Colonic mucosa (tissue), 4 donors: ENCODE measurements at regions of chr4 and their contacts with region 1.

Region 1: DNA sequence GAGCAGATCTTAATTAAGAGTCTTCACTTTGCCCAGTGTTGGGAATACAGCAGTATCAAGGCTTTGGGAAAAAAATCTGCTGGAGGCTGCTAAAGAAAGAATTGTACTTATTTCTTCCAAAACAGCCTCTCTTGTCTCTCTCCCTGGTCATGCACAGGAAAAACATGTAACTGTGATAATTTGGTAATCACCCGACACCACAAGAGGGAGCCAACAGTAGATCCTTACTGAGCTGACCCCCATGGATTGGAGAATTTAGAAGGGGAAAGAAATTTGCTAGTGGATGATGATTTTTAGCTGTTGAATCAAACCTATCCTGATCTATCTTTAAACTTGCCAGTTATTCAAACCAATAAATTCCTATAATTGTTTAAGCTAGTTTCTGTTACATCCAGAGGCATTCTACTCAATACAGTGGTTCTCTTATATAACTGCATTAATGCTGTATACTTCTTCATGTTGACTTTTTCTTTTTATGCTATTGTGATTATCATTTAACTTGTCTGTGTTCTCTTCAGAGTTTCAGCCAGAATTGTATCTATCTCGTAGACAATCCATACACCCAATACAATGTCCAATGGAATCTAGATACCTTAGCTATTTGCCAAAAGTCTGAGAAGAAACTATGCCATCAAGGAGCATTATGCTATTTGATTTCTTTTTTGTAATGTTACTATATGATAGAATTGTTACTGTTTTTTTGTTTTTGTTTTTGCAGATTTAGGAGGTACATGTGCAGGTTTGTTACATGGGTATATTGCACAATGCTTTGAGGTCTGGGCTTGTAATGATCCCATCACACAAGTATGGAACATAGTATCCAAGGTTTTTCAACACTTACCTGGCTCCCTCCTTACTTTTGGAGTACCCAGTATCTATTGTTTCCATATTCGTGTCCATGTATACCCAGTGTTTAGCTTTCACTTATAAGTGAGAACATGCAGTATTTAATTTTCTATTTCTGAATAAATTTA is 31.3 kb upstream of the ARHGEF38 start:
- DNase-seq: peak; percentile 60
- H3K4me3 ChIP-seq: no peak overlapping the region
- H3K27ac ChIP-seq: no peak overlapping the region
- H3K4me1 ChIP-seq: no peaks in the 10 kb centered on the region
- H3K27me3 ChIP-seq: no peaks in the 10 kb centered on the region
- CTCF ChIP-seq: peak; percentile 84

Region 2: DNA sequence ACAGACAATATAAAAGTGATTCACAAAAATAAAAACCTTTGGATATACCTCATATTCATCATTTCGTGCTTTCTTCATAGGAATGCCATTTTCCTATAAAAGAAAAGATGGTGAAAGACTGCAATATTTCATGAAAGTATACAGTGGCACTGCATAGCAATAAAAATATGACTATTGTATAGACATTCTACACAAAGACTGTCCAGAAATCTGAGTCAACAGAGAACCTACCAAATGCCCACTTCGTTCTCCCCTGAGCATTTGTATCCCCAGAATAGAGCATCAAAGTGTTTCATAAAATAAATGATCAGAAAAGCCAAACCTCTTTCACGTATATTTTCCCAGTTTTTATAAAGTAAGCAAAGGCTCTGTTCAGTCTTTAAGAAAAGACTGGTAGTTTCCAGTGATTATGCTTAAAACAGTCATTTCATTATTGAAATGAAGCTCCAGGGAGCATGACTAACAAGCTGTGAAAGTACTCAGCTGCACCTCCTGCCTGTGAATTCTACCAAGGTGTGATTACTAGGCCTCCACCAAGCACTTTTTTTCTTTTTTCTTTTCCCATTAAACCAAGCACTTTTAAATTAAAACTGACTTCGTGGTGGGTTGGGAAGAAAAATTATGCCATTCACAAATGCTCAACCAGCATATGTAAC is 67.4 kb before region 1 on chr4:
- intact Hi-C with region 1: no loop called
- DNase-seq: no peak
- H3K4me3 ChIP-seq: no peak overlapping the region
- H3K27ac ChIP-seq: no peak overlapping the region
- H3K4me1 ChIP-seq: no peaks in the 10 kb centered on the region
- H3K27me3 ChIP-seq: no peaks in the 10 kb centered on the region
- CTCF ChIP-seq: no peak

Region 3: GRCh38 chr4:105679186-105679585 is 158.1 kb after region 1 on chr4:
- intact Hi-C with region 1: loop called (anchors 10 kb)
- DNase-seq: peak; percentile 24
- H3K4me3 ChIP-seq: no peak overlapping the region
- H3K27ac ChIP-seq: peak overlapping the region; percentile 30
- H3K4me1 ChIP-seq: peaks cover 5% of the 10 kb centered on the region
- H3K27me3 ChIP-seq: no peaks in the 10 kb centered on the region
- CTCF ChIP-seq: no peak

Region 4: DNA sequence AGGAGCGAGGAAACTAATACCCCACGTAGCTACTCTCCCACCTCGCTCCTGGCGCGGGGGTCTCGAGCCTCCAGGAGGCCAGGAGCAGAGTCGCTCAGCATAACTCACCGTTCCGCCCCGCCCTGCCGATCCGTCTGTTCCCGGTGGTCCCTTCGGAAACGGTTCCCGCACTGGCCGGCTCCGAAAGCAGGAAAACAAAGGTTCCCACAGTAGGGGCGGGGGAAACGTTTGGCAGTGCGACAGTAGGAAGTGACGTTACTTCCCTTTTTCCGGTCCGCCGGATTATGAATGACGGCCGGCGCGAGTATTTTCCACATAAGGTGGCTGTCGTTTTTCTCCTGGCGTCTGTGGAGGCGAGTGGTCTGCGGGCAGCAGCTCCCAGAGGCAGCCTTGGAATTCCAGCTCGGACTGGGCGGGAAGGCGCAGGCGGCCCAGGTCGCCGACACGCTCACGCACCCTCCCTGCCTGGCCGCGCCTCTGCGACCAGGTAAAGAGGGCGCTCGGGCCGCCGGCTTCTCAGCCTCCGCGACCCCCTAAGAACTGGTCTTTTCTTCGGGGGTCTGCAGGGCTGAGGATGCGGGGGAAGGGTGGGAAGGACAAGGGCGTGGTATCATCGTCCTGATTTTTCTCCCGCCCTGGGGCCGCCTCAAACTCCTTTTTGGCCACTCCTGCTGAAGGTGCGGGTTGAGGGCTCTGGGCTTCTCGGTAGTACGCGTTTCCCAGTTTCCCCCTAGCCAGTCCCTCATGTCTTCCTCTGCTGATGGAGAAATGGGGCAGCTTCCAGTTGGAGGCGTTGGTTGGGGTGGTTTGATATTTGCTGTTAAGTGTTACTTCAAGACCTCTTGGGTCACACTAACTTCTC is 187.7 kb after region 1 on chr4 and contains the starts of genes GSTCD and INTS12:
- intact Hi-C with region 1: loop called (anchors 10 kb)
- DNase-seq: peak; percentile 96
- H3K4me3 ChIP-seq: peak within 1 kb of the TSS; percentile 97
- H3K27ac ChIP-seq: peak within 1 kb of the TSS; percentile 89
- H3K4me1 ChIP-seq: peaks cover 6% of the 10 kb centered on the region
- H3K27me3 ChIP-seq: no peaks in the 10 kb centered on the region
- CTCF ChIP-seq: no peak
- total RNA-seq, gene GSTCD: 9.0 to 17.5 TPM
- total RNA-seq, gene INTS12: 14.1 to 18.0 TPM